OCI-LY7 (cell line): ENCODE measurements at regions of chr1 and their contacts with region 1.

Region 1: GRCh38 chr1:180020017-180020416 is 65.4 kb downstream of the CEP350 start:
- DNase-seq: no peak
- H3K4me3 ChIP-seq: no peak overlapping the region
- H3K27ac ChIP-seq: no peak overlapping the region
- H3K4me1 ChIP-seq: no peaks in the 10 kb centered on the region
- CTCF ChIP-seq: no peak

Region 2: DNA sequence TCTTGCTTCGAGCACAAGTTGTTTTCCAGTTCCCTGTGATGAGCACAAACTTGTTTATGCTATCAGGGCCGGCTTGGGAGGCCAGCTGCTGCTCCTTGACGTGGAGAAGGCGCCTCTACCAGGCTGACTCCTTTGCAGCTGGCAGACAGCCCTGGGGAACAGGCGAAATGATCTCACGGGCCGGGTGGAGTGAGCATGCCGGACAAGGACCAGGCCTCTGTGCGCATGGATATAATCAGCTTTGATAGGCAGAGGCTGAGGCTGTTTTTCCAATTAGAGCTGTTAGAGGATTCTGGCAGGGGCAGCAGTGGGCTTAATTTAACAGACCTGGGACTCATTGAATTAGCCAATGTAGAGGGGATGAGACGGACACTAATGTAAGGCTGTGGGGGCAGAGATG is 238.1 kb before region 1 on chr1:
- CTCF ChIA-PET with region 1: no interaction called
- POLR2A ChIA-PET with region 1: no interaction called
- intact Hi-C with region 1: no loop called
- DNase-seq: no peak
- H3K4me3 ChIP-seq: no peak overlapping the region
- H3K27ac ChIP-seq: no peak overlapping the region
- H3K4me1 ChIP-seq: no peaks in the 10 kb centered on the region
- CTCF ChIP-seq: no peak

Region 3: DNA sequence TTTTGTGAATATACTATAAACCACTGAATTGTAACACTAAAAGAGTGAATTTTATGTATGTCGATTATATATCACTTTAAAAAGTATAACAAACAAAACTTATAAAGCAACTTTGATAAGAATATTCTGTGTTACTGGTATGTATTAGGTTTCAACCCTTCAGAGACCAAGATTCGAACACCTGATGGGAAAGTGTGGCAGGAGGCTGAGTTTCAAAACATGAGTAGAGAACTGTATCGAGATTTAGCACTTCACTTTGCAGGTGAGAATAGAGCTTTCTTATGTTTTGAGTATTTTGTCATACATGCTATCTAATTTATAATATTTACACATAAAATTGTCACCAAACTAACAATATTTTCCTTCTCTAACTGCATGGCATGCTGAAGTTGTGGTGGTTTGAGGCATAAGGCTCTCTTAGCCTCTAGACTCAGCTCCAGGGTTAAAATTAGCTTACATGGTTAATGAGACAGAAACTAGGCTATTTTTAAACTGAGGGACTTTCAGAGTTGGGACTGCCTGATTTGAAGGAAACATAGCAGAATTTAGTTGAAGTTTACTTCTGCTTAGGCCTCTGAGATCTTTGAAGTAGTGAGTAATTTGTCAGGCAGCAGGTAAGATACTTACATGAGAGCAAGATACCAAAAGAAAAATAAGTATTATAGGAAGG is 16.9 kb before region 1 on chr1:
- CTCF ChIA-PET with region 1: no interaction called
- POLR2A ChIA-PET with region 1: interaction called, 4 read pairs
- intact Hi-C with region 1: loop called (anchors 1 kb)
- DNase-seq: no peak
- H3K4me3 ChIP-seq: no peak overlapping the region
- H3K27ac ChIP-seq: no peak overlapping the region
- H3K4me1 ChIP-seq: peaks cover 8% of the 10 kb centered on the region
- CTCF ChIP-seq: no peak

Region 4: GRCh38 chr1:180057883-180058396 is 37.9 kb after region 1 on chr1:
- CTCF ChIA-PET with region 1: no interaction called
- POLR2A ChIA-PET with region 1: interaction called, 10 read pairs
- intact Hi-C with region 1: no loop called
- DNase-seq: no peak
- H3K4me3 ChIP-seq: no peak overlapping the region
- H3K27ac ChIP-seq: no peak overlapping the region
- H3K4me1 ChIP-seq: no peaks in the 10 kb centered on the region
- CTCF ChIP-seq: no peak